ENCODE measurements at regions of chr19 and their contacts with region 1.

Region 1: DNA sequence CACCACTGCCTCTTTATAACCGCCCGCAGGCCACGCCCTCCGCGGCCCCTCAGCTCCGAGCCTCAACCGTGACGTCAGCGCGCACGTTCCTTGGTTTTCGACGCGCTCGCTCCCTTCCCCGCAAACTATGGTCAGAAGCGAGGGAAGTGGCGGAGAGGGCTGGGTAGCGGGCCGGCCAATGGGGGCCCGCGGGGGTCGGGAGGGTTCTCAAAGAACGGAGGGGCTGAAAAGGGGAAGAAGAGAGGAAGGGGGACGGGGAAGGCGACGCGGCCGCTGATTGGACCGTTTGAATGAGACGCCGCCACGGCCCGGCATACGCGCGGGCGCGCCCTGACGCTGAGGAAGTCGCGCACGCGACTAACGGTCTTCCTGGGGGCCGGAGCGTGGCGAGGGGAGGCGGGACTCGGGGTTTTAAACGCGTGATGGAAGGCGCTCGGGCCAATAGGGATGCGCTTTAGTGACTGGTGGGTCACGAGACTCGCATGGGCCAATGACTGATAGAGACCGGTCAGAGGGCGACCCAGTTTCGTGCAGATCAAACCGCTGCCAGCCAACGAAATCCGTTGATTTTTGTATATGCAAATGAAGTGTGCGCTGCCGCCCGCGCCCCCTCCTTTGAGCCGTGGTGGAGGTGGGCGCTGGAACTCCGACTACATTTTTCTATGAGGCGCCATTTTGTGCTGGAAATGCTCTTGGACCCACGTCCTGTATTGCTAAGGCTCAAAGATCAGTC is 378 bp upstream of the UBE2S start:
- DNase-seq: peak; percentile 96
- H3K4me3 ChIP-seq: peak overlapping the region; percentile 38 to 98 (median 72)
- H3K27ac ChIP-seq: peak overlapping the region; percentile 94
- H3K4me1 ChIP-seq: peaks cover 0 to 20% (median 13%) of the 10 kb centered on the region in 4 experiments; a peak in 6 of 7 replicates
- H3K27me3 ChIP-seq: peaks cover 0 to 4% (median 1%) of the 10 kb centered on the region in 4 experiments; a peak in 2 of 7 replicates
- CTCF ChIP-seq: no peak
- EP300 ChIP-seq: no peak
- POLR2A ChIP-seq: peak in 1 of 2 experiments; percentile 95; a peak in 2 of 3 replicates
- RAD21 ChIP-seq: peak in 1 of 2 experiments; percentile 5; a peak in 1 of 4 replicates

Region 2: DNA sequence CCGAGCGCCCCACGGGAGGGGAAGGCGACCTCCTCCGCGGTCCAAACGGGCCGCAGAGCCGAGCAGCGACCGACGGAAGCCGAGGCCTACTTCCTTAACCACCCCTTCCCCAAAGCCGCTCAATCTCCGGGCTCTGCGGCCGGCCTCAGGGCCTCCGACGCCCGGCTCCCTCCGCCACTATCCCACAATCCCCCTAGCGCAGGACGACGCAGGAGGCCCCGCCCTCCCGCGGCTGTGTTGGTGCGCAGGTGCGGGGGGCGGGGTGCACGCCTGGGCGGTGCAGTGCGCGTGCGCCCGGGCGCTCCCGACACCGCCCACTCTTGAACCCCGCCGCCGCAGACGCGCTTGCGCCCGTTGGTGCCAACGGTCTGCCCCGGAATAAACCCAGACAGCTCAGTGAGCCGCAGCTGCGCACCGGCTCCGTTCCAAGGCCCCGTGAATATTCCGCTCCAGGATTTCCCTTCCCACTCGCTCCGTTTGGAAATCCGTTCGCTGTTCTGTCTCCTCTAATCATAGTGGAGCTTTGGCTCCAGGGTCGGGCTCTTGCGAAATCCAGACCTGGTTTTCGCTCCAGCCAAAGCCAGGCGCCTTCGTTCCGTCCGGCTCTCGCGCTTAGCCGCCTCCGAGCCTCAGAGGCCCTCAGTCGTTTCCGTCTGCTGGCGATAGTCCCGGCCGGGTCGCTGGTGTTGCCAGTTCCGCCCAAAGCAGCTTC is 149.0 kb before region 1 on chr19 and contains the start of gene PPP6R1:
- CTCF ChIA-PET with region 1: no interaction called
- POLR2A ChIA-PET with region 1: interaction called, 23 read pairs
- DNase-seq: peak; percentile 83 to 99
- H3K4me3 ChIP-seq: peak within 1 kb of the TSS; percentile 79 to 89 (median 82)
- H3K27ac ChIP-seq: peak within 1 kb of the TSS; percentile 65; the same call in 1 of the 2 replicates
- H3K4me1 ChIP-seq: peaks cover under 1 to 19% (median 15%) of the 10 kb centered on the region in 4 experiments; a peak in 6 of 7 replicates
- H3K27me3 ChIP-seq: no peaks in the 10 kb centered on the region
- CTCF ChIP-seq: 0 out of 4 replicates have a peak, but pooled peaks of 1 of the 3 experiments have one; percentile 11
- EP300 ChIP-seq: no peak
- POLR2A ChIP-seq: peak in 1 of 2 experiments; percentile 82; a peak in 2 of 3 replicates
- RAD21 ChIP-seq: peak in 1 of 2 experiments; percentile 7; a peak in 1 of 4 replicates
- total RNA-seq, gene PPP6R1: 74.4 and 75.6 TPM in 2 replicates

Region 3: DNA sequence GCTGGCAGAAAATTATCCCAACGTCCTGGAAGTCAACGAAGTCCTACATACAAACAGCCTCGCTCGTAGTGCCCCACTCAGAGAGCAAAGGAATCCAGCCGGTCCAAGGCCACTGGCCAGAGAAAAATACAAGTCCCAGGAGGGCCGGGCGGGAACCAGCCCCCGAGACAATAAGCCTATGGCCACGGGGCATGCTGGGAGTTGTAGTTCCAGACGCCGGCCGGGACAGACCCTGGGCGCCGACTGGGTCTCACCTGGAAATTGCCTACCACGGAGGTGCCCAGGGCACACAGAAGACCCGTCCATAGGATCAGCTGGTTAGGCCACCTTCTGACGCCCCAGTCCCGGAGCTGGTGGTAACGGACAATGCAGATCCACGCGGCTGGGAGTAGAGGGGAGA is 88.2 kb before region 1 on chr19:
- CTCF ChIA-PET with region 1: no interaction called
- POLR2A ChIA-PET with region 1: interaction called, 16 read pairs
- DNase-seq: peak; percentile 61 to 93
- H3K4me3 ChIP-seq: peak overlapping the region; percentile 24 to 56 (median 37); a peak in 7 of 8 replicates
- H3K27ac ChIP-seq: no peak overlapping the region
- H3K4me1 ChIP-seq: peaks cover 0 to 10% (median 5%) of the 10 kb centered on the region in 4 experiments; a peak in 6 of 7 replicates
- H3K27me3 ChIP-seq: no peaks in the 10 kb centered on the region
- CTCF ChIP-seq: no peak
- EP300 ChIP-seq: no peak
- POLR2A ChIP-seq: no peak; a peak in 1 of 3 replicates
- RAD21 ChIP-seq: no peak

Region 4: DNA sequence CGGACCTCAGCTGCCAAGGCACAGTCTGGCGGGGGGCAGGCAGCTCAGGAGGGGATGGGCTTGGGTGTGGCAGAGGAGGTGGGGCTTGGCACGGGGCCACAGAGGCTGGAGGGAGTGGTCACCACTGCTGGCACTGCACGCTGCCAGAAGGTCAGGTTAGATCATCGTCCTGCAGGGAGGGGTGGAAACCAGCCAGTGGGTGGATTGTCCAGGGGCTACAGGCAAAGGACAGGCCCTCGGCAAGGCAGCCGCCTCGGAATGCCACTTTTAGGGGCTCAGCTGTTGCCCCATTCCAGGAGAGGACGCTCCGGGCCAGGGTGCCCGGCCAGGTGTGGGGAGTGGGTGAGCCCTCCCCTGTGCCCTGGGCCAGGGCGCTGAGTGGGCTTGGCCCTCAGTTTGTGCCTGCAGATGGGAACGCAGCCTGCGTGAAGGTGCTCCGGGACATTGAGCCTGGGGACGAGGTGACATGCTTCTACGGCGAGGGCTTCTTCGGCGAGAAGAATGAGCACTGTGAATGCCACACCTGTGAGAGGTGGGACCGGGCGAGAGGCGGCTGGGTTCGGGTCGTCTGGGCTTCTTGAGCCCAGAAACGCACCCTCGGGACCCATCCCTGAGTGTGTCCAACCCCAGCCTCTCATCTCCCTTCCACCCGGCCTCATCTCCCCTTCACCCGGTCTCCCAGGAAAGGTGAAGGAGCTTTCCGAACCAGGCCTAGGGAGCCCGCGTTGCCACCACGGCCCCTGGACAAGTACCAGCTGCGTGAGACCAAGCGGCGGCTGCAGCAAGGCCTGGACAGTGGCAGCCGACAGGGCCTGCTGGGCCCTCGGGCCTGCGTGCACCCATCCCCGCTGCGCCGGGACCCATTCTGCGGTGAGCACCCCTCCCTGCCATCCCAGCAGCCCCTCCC is 61.9 kb before region 1 on chr19:
- CTCF ChIA-PET with region 1: no interaction called
- POLR2A ChIA-PET with region 1: interaction called, 42 read pairs
- DNase-seq: no peak
- H3K4me3 ChIP-seq: no peak overlapping the region
- H3K27ac ChIP-seq: peak overlapping the region; percentile 37; the same call in 1 of the 2 replicates
- H3K4me1 ChIP-seq: peaks cover 11 to 44% (median 32%) of the 10 kb centered on the region in 4 experiments
- H3K27me3 ChIP-seq: no peaks in the 10 kb centered on the region
- CTCF ChIP-seq: no peak
- EP300 ChIP-seq: no peak
- POLR2A ChIP-seq: no peak
- RAD21 ChIP-seq: no peak

Region 5: DNA sequence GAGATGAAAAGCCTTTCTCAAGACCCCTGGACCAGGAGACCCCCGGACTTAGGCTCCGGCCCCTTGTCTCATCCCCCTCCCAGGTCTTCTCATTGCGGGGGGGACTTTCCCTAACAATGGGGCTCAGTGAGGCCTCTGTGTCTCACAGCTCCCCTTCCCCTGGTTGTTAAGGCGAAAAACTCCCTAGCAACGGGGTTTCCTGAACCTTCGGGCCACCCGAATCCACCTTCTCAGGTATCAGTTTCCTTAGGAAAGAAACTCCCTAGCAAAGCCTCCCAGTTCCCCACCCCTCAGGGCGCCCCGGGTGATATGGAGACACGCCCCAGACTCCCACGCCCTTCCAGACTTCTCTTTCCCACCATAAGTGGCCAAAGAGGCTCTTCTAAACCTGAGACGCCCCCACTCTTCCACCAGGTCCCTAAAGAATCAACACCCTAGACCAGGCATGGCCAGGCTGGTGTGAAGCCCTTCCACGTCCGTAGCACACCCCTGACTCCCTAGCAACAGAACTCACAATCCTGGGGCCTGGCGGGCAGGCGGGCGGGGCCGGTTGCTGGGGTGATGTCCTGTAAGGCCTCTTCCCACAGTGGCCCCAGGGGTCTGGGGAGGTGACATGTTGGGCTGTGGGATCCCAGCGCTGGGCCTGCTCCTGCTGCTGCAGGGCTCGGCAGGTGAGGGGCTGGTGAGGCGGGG is 31.6 kb before region 1 on chr19 and contains the start of gene TMEM190:
- CTCF ChIA-PET with region 1: interaction called, 3 read pairs
- POLR2A ChIA-PET with region 1: interaction called, 27 read pairs
- DNase-seq: peak in 1 of 2 experiments; percentile 76
- H3K4me3 ChIP-seq: peak within 1 kb of the TSS; percentile 35 to 60 (median 44); a peak in 7 of 8 replicates
- H3K27ac ChIP-seq: no peak within 1 kb of the TSS
- H3K4me1 ChIP-seq: peaks cover 5 to 49% (median 36%) of the 10 kb centered on the region in 4 experiments
- H3K27me3 ChIP-seq: peaks cover 8 to 34% (median 25%) of the 10 kb centered on the region in 4 experiments
- CTCF ChIP-seq: no peak
- EP300 ChIP-seq: no peak
- POLR2A ChIP-seq: no peak
- RAD21 ChIP-seq: no peak
- total RNA-seq, gene TMEM190: 1.4 TPM in 1 of 2 replicates, not detected in the other

Region 6: GRCh38 chr19:55437410-55438075 is 29.6 kb after region 1 on chr19:
- CTCF ChIA-PET with region 1: no interaction called
- POLR2A ChIA-PET with region 1: interaction called, 48 read pairs
- DNase-seq: peak in 1 of 2 experiments; percentile 87
- H3K4me3 ChIP-seq: no peak overlapping the region
- H3K27ac ChIP-seq: no peak overlapping the region
- H3K4me1 ChIP-seq: peaks cover 6 to 17% (median 7%) of the 10 kb centered on the region in 4 experiments
- H3K27me3 ChIP-seq: peaks cover 14 to 44% (median 36%) of the 10 kb centered on the region in 4 experiments
- CTCF ChIP-seq: no peak
- EP300 ChIP-seq: no peak
- POLR2A ChIP-seq: no peak
- RAD21 ChIP-seq: peak; percentile 8 to 15; a peak in 2 of 4 replicates

Region 7: DNA sequence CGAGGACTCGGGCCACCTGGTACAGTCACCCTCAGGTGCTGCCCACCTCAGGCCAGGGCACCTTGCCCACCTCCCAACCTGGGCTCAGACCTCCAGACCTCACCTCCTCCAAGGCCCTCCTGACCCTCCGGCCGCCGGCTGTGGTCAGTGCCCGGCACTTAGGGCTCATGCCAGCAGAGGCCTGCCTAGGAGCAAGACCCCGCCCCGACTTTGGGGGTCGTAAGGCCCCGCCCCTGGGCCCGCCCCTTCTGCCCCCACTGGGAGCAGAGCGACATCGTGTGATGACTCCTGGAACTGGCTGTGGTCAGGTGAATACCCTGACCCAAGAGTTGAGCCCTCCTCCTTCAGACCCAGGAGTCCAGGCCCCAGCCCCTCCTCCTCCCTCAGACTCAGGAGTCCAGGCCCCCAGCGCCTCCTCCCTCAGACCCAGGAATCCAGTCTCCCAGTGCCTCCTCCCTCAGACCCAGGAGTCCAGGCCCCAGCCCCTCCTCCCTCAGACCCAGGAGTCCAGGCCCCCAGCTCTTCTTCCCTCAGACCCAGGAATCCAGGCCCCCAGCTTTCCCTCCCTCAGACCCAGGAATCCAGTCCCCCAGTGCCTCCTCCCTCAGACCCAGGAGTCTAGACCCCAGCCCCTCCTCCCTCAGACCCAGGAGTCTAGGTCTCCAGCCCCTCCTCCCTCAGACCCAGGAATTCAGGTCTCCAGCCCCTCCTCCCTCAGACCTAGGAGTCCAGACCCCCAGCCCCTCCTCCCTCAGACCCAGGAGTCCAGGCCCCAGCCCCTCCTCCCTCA is 129.2 kb after region 1 on chr19 and contains the start of gene SBK2:
- CTCF ChIA-PET with region 1: no interaction called
- POLR2A ChIA-PET with region 1: no interaction called
- DNase-seq: peak; percentile 62 to 98
- H3K4me3 ChIP-seq: peak within 1 kb of the TSS; percentile 12 to 58 (median 29); a peak in 5 of 8 replicates
- H3K27ac ChIP-seq: peak within 1 kb of the TSS; percentile 51; the same call in 1 of the 2 replicates
- H3K4me1 ChIP-seq: peaks cover 0 to 17% (median 5%) of the 10 kb centered on the region in 4 experiments; a peak in 4 of 7 replicates
- H3K27me3 ChIP-seq: no peaks in the 10 kb centered on the region; a peak in 2 of 7 replicates
- CTCF ChIP-seq: peak; percentile 75 to 88 (median 84)
- EP300 ChIP-seq: no peak
- POLR2A ChIP-seq: 0 out of 3 replicates have a peak, but pooled peaks of 1 of the 2 experiments have one; percentile 21
- RAD21 ChIP-seq: peak; percentile 86 to 88
- total RNA-seq, gene SBK2: 3.9 and 4.1 TPM in 2 replicates

Measured in H1 (cell line).